ENCODE measurements at regions of chr6 and their contacts with region 1.

Region 1: DNA sequence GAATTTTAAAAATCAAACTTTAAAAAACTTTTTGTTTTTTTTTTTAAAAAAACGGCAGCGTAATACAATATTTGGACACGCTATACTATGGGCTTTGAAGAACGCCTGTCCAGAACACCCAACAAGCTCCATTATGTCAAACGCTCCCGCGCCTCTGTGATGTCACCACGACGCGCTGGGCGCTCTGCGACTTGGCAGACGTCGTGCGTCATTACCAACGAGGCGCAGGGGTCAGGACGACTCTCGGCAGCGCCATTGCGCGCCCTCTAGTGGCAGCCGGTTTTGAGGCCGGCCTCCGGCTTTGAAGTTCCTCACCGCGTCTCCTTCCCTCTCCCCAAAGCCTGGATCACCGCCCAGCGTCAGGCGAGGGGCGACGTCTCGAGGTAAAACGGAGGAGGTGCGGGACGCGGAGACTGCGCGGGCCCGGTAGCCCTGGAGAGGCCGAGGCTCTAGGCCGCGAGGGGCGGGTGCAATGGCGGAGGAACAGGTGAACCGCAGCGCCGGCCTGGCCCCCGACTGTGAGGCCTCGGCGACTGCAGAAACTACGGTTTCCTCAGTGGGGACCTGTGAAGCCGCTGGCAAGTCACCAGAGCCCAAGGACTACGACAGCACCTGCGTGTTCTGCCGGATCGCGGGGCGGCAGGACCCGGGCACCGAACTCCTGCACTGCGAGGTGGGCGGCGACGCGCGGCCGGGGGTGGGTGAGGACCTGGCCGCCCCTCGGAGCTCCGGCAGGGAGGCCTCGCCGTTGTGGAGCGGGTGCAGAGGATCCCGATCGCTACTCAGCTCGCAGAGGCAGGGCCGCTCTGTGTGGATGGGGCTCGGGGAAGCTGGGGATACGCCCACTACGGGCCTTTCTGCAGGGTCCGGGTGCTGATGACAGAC is at the start of gene HINT3:
- DNase-seq: peak; percentile 99
- ATAC-seq: peak; percentile 98
- total RNA-seq, gene HINT3: 33.5 TPM

Region 2: GRCh38 chr6:125798734-125799508 is 157.8 kb before region 1 on chr6:
- intact Hi-C with region 1: loop called (anchors 5 kb)
- DNase-seq: no peak
- ATAC-seq: no peak